CD8-positive, alpha-beta T cell (primary cell): ENCODE measurements at regions of chr3 and their contacts with region 1.

Region 1: GRCh38 chr3:31462050-31462569 is 70.6 kb upstream of the STT3B start:
- DNase-seq: peak in 8 of 9 experiments; percentile 11 to 92 (median 58)
- ATAC-seq: peak; percentile 83
- H3K4me3 ChIP-seq: peak overlapping the region; percentile 16 to 33
- H3K4me3 Mint-ChIP-seq: peak overlapping the region; percentile 73
- H3K27ac ChIP-seq: peak overlapping the region; percentile 40 to 71
- H3K27ac Mint-ChIP-seq: peak overlapping the region; percentile 97
- H3K4me1 ChIP-seq: peaks cover 53% of the 10 kb centered on the region
- H3K4me1 Mint-ChIP-seq: peaks cover 66% of the 10 kb centered on the region
- H3K27me3 ChIP-seq: no peaks in the 10 kb centered on the region
- H3K27me3 Mint-ChIP-seq: no peaks in the 10 kb centered on the region
- CTCF ChIP-seq: no peak

Region 2: DNA sequence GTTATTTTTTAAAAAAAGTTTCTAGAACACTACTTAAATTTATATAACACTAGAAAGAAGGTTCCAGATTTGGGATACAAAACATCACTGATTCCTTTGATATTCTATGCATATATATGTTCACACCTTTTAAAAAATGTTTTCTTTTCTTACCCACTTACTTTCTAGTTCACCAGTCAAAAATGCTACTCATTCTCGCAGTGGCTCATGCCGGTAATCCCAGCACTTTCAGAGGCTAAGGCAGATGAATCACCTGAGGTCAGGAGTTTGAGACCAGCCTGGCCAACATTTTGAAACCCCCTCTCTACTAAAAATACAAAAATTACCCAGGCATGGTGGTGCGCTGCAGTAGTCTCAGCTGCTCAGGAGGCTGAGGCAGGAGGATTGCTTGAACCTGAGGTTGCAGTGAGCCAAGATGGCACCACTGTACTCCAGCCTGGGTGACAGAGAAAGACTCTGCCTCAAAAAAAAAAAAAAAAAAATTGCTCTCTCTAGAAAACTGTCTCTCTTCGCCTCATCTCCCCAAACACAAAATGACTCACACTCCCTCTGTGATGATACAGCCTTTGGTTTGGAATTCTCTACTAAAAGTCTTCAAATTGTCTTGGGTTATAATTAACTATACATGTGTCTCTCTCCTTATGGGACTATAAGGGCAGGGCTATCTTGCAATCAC is 908.3 kb before region 1 on chr3:
- CTCF ChIA-PET with region 1: no interaction called
- POLR2A ChIA-PET with region 1: no interaction called
- intact Hi-C with region 1: no loop called
- DNase-seq: no peak
- ATAC-seq: no peak
- H3K4me3 ChIP-seq: no peak overlapping the region
- H3K4me3 Mint-ChIP-seq: no peak overlapping the region
- H3K27ac ChIP-seq: no peak overlapping the region
- H3K27ac Mint-ChIP-seq: no peak overlapping the region
- H3K4me1 ChIP-seq: no peaks in the 10 kb centered on the region
- H3K4me1 Mint-ChIP-seq: peaks cover 9% of the 10 kb centered on the region
- H3K27me3 ChIP-seq: no peaks in the 10 kb centered on the region
- H3K27me3 Mint-ChIP-seq: no peaks in the 10 kb centered on the region
- CTCF ChIP-seq: no peak

Region 3: GRCh38 chr3:31213869-31214486 is 248.1 kb before region 1 on chr3:
- CTCF ChIA-PET with region 1: no interaction called
- POLR2A ChIA-PET with region 1: no interaction called
- intact Hi-C with region 1: loop called in 1 of 2 experiments (anchors 5 kb)
- DNase-seq: peak in 5 of 9 experiments; percentile 15 to 70 (median 34)
- ATAC-seq: peak; percentile 55
- H3K4me3 ChIP-seq: no peak overlapping the region
- H3K4me3 Mint-ChIP-seq: peak overlapping the region; percentile 74
- H3K27ac ChIP-seq: no peak overlapping the region
- H3K27ac Mint-ChIP-seq: peak overlapping the region; percentile 78
- H3K4me1 ChIP-seq: peaks cover 43% of the 10 kb centered on the region
- H3K4me1 Mint-ChIP-seq: peaks cover 86% of the 10 kb centered on the region
- H3K27me3 ChIP-seq: no peaks in the 10 kb centered on the region
- H3K27me3 Mint-ChIP-seq: no peaks in the 10 kb centered on the region
- CTCF ChIP-seq: no peak

Region 4: GRCh38 chr3:31377045-31377642 is 85.0 kb before region 1 on chr3:
- CTCF ChIA-PET with region 1: no interaction called
- POLR2A ChIA-PET with region 1: no interaction called
- intact Hi-C with region 1: loop called in 1 of 2 experiments (anchors 5 kb)
- DNase-seq: peak in 2 of 9 experiments; percentile 38 to 55
- ATAC-seq: peak; percentile 88
- H3K4me3 ChIP-seq: no peak overlapping the region
- H3K4me3 Mint-ChIP-seq: no peak overlapping the region
- H3K27ac ChIP-seq: no peak overlapping the region
- H3K27ac Mint-ChIP-seq: no peak overlapping the region
- H3K4me1 ChIP-seq: peaks cover 7% of the 10 kb centered on the region
- H3K4me1 Mint-ChIP-seq: peaks cover 12% of the 10 kb centered on the region
- H3K27me3 ChIP-seq: no peaks in the 10 kb centered on the region
- H3K27me3 Mint-ChIP-seq: no peaks in the 10 kb centered on the region
- CTCF ChIP-seq: no peak

Region 5: DNA sequence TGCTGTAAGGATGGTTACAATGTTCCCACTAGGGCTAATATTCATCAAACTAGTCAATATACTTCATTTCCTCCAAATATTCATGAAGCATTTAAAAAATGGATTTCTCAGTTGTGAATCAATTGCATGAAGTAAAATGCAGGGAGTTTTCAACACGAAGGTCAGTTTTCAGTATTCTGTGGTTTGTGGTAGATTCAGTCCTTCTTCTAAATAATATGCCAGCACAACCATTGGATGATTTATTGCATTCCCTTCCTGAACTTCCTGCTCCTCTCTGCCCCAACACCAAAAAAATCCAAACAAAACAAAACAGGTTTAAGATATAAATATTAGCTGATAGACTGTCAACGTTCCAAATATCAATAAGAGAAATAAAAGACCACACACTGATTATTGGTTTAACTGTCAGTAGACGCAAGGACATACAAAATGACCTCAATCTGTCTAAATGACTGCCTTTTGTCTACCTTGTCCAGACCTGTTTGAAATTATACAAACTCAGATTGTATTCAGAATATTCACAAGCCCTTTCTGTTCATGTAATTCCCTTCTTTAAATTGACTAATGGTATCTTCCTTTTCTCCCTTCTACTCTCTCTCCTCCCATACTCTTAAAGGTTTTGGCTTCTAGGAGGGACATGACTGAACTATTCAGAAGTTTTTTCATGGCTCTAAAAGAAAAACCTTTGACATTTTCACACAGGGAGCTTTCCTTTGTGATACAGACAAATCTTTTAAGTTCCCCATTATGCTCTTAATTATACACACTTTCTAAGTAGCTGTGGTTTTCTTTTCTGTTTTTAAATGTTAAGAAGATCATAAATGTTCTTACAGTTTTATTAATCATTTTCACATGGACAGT is 22.0 kb before region 1 on chr3:
- CTCF ChIA-PET with region 1: no interaction called
- POLR2A ChIA-PET with region 1: no interaction called
- intact Hi-C with region 1: no loop called
- DNase-seq: no peak
- ATAC-seq: no peak
- H3K4me3 ChIP-seq: no peak overlapping the region
- H3K4me3 Mint-ChIP-seq: no peak overlapping the region
- H3K27ac ChIP-seq: no peak overlapping the region
- H3K27ac Mint-ChIP-seq: no peak overlapping the region
- H3K4me1 ChIP-seq: no peaks in the 10 kb centered on the region
- H3K4me1 Mint-ChIP-seq: peaks cover 10% of the 10 kb centered on the region
- H3K27me3 ChIP-seq: no peaks in the 10 kb centered on the region
- H3K27me3 Mint-ChIP-seq: no peaks in the 10 kb centered on the region
- CTCF ChIP-seq: no peak

Region 6: DNA sequence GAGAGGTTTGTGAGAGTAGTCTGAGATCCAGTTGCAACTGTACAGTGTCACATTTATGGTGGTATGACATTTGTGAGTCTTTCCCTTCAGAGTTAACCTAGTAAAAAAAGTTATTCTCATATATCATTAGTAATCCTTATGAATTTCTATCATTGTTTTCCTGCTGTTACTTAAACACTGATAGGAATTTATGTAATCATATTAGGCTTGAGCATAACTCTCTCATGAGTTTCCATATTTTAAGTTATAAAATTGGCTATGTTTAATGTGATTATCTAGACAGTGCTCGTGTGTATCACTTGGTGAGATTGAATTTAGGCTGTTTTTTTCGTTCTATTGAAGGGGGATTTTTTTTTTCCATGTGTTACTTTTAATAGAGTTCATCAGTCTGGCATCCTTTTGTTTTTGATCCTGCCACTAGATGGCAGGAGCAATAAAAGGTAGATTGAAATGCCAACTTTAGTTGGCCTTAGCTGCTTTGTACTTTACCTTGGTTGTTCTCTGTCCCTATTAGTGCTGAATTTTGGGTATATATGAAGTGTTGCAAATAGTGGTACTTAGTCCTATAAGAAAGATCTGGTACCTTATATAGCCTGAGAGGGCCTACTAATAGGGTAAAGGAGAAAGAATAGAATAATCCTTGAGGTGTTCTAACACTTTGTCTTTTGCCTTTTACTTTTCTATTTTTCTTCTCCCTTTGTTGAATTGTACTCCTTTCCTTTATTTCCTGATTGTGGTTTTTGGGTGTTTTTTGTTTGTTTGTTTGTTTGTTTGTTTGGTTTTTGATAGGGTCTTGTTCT is 88.5 kb after region 1 on chr3:
- CTCF ChIA-PET with region 1: interaction called, 4 read pairs
- POLR2A ChIA-PET with region 1: interaction called, 3 read pairs
- intact Hi-C with region 1: loop called in 1 of 2 experiments (anchors 5 kb)
- DNase-seq: peak in 2 of 9 experiments; percentile 59 to 72
- ATAC-seq: peak; percentile 73
- H3K4me3 ChIP-seq: no peak overlapping the region
- H3K4me3 Mint-ChIP-seq: peak overlapping the region; percentile 33
- H3K27ac ChIP-seq: no peak overlapping the region
- H3K27ac Mint-ChIP-seq: peak overlapping the region; percentile 70
- H3K4me1 ChIP-seq: peaks cover 57% of the 10 kb centered on the region
- H3K4me1 Mint-ChIP-seq: peaks cover 83% of the 10 kb centered on the region
- H3K27me3 ChIP-seq: no peaks in the 10 kb centered on the region
- H3K27me3 Mint-ChIP-seq: no peaks in the 10 kb centered on the region
- CTCF ChIP-seq: peak; percentile 64

Region 7: GRCh38 chr3:31724661-31725060 is 262.6 kb after region 1 on chr3:
- CTCF ChIA-PET with region 1: no interaction called
- POLR2A ChIA-PET with region 1: no interaction called
- intact Hi-C with region 1: no loop called
- DNase-seq: no peak
- ATAC-seq: no peak
- H3K4me3 ChIP-seq: no peak overlapping the region
- H3K4me3 Mint-ChIP-seq: no peak overlapping the region
- H3K27ac ChIP-seq: no peak overlapping the region
- H3K27ac Mint-ChIP-seq: no peak overlapping the region
- H3K4me1 ChIP-seq: no peaks in the 10 kb centered on the region
- H3K4me1 Mint-ChIP-seq: no peaks in the 10 kb centered on the region
- H3K27me3 ChIP-seq: no peaks in the 10 kb centered on the region
- H3K27me3 Mint-ChIP-seq: peaks cover 11% of the 10 kb centered on the region
- CTCF ChIP-seq: no peak

Region 8: GRCh38 chr3:31903686-31904431 is 441.7 kb after region 1 on chr3:
- CTCF ChIA-PET with region 1: no interaction called
- POLR2A ChIA-PET with region 1: no interaction called
- intact Hi-C with region 1: no loop called
- DNase-seq: no peak
- ATAC-seq: no peak
- H3K4me3 ChIP-seq: no peak overlapping the region
- H3K4me3 Mint-ChIP-seq: no peak overlapping the region
- H3K27ac ChIP-seq: no peak overlapping the region
- H3K27ac Mint-ChIP-seq: no peak overlapping the region
- H3K4me1 ChIP-seq: peaks cover 9% of the 10 kb centered on the region
- H3K4me1 Mint-ChIP-seq: peaks cover 6% of the 10 kb centered on the region
- H3K27me3 ChIP-seq: no peaks in the 10 kb centered on the region
- H3K27me3 Mint-ChIP-seq: no peaks in the 10 kb centered on the region
- CTCF ChIP-seq: no peak

Region 9: GRCh38 chr3:32106280-32106928 is 644.3 kb after region 1 on chr3 and contains the start of gene GPD1L:
- CTCF ChIA-PET with region 1: no interaction called
- POLR2A ChIA-PET with region 1: no interaction called
- intact Hi-C with region 1: loop called in 1 of 2 experiments (anchors 10 kb)
- DNase-seq: peak; percentile 84 to 95 (median 90)
- ATAC-seq: peak; percentile 97
- H3K4me3 ChIP-seq: peak within 1 kb of the TSS; percentile 70 to 80
- H3K4me3 Mint-ChIP-seq: peak within 1 kb of the TSS; percentile 91
- H3K27ac ChIP-seq: peak within 1 kb of the TSS; percentile 46 to 57
- H3K27ac Mint-ChIP-seq: peak within 1 kb of the TSS; percentile 67
- H3K4me1 ChIP-seq: peaks cover 13% of the 10 kb centered on the region
- H3K4me1 Mint-ChIP-seq: peaks cover 33% of the 10 kb centered on the region
- H3K27me3 ChIP-seq: no peaks in the 10 kb centered on the region
- H3K27me3 Mint-ChIP-seq: no peaks in the 10 kb centered on the region
- CTCF ChIP-seq: no peak
- total RNA-seq, gene GPD1L: 9.5 to 9.8 TPM